ENCODE measurements at regions of chr11 and their contacts with region 1.

Region 1: GRCh38 chr11:45102810-45103621 is 43.4 kb upstream of the PRDM11 start:
- DNase-seq: peak; percentile 49
- H3K4me3 ChIP-seq: no peak overlapping the region
- H3K27me3 ChIP-seq: peaks cover 6% of the 10 kb centered on the region
- CTCF ChIP-seq: peak; percentile 95

Region 2: DNA sequence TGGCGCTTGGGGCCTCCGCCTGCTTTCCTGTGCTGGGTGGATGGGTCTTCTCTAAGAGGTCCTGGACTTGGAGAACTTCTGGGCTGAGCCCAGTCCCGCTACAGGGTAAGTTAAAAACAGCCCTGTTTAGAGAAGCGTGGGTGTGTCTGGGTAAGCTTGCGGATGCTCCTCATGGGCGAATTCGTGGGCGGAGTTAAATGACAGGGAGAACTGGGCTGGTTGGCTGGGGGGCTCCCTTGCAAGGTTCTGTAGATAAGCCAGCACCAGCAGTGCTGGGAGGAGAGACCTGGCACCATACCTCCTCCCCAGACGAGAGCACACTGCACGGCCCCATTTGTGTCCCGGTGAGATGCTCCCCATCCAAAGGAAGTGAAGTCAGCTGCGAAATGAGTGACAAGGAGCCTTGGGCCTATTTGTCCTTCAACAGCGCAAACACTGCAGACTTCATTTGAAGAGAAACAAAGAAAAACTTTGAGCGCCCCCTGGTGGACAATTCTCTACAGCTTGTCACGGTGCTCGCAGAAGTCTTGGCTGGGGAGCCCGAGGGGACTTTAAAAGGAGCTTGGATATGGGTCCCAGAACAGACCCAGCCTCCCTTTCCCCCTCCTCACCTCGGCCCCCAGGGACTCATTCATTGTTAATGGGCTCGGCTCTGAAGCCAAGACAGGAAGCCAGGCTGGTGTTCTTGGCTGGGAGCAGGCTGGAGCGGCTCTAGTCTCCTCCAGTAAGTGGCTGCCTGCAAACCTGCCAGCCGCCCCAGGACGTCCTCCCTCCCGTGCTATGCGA is 191.8 kb before region 1 on chr11:
- CTCF ChIA-PET with region 1: interaction called, 18 read pairs
- POLR2A ChIA-PET with region 1: no interaction called
- DNase-seq: no peak
- H3K4me3 ChIP-seq: no peak overlapping the region
- H3K27me3 ChIP-seq: 0 out of 2 replicates have a peak, but pooled peaks cover 2% of the 10 kb centered on the region
- CTCF ChIP-seq: peak; percentile 79

Region 3: DNA sequence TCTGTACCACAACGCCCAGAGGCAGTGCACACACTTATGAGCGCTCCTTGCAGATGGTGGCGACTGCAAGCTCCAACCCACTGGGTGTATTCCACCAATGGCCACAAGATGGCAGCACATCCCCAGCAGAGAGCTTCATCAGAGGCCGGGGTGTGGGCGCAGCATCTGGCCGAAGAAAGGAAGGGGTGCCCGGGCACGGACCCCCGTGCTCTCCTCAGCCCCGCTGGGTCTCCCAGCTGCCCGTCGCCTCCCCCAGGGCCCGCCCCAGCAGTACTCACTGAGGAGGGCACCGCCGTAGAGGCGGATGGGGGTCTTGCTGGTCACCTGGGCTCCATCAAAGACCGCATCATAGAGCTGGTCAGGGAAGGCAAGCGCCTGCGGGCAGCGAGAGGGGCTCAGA is 166.5 kb before region 1 on chr11:
- CTCF ChIA-PET with region 1: interaction called, 1,245 read pairs
- POLR2A ChIA-PET with region 1: interaction called, 10 read pairs
- DNase-seq: no peak
- H3K4me3 ChIP-seq: no peak overlapping the region
- H3K27me3 ChIP-seq: 0 out of 2 replicates have a peak, but pooled peaks cover 2% of the 10 kb centered on the region
- CTCF ChIP-seq: peak; percentile 88

Region 4: DNA sequence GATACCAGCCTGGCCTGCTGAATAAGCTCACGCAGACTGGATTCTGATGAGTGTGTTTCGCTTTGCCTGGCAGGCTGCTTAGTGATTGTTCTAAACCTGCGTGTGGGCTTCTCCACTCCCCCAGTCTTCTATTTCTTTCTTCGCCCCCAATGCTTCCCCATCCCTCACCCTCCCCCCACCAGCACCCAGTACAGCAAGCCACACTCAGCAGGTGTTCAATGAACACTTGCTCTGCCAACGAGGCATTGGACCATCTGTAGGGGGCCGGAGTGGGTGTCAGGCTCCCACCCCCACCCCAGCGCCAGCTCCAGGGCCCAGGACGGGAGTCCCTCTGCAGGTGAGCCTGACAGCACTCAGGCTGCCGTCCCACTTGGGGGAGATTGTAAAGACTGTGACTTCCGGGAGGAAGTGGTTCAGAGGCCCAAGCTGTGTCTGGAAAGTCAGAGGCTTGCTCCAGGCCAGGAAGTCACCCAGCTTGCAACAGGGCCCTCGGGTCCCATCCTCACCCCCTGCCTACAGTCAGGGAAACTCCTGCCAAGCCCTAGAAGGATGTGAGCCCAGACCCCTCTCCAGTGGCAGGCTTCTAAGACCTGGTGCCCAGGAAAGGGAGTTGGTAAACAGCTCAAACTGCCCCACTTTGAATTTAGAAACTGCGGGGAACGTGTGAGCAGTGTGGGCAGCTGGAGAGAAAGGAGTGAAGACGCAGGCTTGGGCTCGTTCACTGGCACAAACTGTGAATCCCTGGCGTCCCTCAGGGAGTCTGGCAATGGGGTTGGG is 22.9 kb before region 1 on chr11:
- CTCF ChIA-PET with region 1: interaction called, 10 read pairs
- POLR2A ChIA-PET with region 1: no interaction called
- DNase-seq: no peak
- H3K4me3 ChIP-seq: no peak overlapping the region
- H3K27me3 ChIP-seq: peaks cover 10% of the 10 kb centered on the region
- CTCF ChIP-seq: no peak

Region 5: DNA sequence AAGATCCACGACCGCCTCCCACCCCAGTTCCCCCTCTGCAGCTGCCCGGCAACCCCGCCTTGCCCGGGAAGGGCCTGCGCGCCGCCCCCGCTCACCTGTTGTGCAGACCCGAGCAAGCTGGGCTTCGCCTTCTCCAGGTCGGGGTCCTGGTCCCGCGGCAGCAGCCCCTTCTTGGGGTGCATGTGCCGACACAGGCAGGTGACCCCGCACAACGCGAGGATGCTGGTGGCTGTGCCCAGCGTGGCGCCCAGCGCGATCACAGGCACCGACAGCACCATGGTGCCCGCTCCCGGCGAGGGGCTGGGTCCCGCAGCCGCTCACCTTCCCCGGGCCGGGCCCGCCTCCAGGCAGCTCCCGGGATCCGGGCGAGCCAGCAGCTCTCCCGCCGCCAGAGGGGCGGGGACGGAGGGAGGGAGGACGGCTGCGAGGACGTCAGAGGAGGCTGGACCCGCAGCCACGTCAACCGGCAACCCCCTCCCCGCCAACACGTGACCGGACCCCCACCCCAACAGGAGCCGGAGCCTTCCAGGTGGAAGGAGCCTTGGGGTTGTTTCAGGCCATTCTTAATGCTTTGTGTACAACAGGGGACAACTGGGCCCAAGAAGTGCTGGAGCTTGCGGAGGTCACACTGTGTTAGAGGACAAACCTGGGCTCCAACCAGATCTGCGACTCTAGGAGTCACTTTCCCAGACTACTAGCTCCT is 183.1 kb after region 1 on chr11 and contains the start of gene SYT13:
- CTCF ChIA-PET with region 1: interaction called, 134 read pairs
- POLR2A ChIA-PET with region 1: no interaction called
- DNase-seq: no peak
- H3K4me3 ChIP-seq: no peak within 1 kb of the TSS
- H3K27me3 ChIP-seq: peaks cover 16% of the 10 kb centered on the region
- CTCF ChIP-seq: no peak
- polyA plus RNA-seq, gene SYT13: not detected in 2 replicates

Measured in BJ (cell line).